Breast epithelium (tissue), 4 donors: ENCODE measurements at regions of chr7 and their contacts with region 1.

Region 1: GRCh38 chr7:80770675-80771081 is 132.2 kb downstream of the CD36 start:
- DNase-seq: no peak
- H3K4me3 ChIP-seq: no peak overlapping the region
- H3K27ac ChIP-seq: no peak overlapping the region
- H3K4me1 ChIP-seq: no peaks in the 10 kb centered on the region
- H3K27me3 ChIP-seq: no peaks in the 10 kb centered on the region
- CTCF ChIP-seq: no peak
- POLR2A ChIP-seq: no peak

Region 2: DNA sequence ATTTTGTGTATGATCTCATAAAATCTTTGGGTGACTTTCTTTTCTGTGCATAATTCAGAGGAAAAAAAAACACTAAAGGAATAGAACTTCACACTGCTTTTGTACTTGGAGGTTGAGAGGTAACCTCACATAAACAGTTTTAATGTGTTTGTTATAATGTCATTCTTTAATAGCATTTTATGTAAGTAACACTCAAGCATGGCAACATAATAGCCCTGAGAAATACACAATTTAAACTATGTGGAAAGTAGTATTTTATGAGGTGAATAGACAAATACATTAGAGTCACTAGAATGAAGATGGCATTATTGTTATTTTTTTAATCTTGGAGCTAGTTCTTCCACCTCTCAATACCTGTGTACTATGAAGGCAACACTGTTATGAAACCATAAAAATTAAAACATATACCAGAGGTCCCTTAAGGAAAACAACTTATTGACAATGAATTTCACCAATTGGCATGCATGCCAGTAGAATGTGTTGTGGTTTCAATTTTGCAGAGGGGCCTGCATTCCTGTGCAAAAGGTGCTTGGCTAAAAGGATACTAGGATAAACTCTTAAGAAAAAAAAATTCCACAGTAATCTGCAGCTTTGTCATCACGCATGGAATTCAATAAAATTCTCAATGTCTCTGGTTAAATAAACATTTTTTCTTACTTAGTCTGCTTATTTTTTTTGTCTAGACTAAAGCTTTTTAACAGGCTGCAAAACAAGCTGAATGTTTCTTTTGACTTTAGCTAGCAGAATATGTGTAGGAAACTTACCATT is 29.7 kb before region 1 on chr7:
- intact Hi-C with region 1: loop called (anchors 1 kb)
- DNase-seq: no peak
- H3K4me3 ChIP-seq: no peak overlapping the region
- H3K27ac ChIP-seq: no peak overlapping the region
- H3K4me1 ChIP-seq: no peaks in the 10 kb centered on the region
- H3K27me3 ChIP-seq: no peaks in the 10 kb centered on the region
- CTCF ChIP-seq: no peak
- POLR2A ChIP-seq: no peak